Heart left ventricle (tissue), 16 donors: ENCODE measurements at regions of chr11 and their contacts with region 1.

Region 1: GRCh38 chr11:112881461-112881860 is 79.8 kb upstream of the NCAM1 start:
- DNase-seq: peak; percentile 77 to 90 (median 83)
- ATAC-seq: peak; percentile 87 to 96 (median 92)
- H3K4me3 ChIP-seq: peak overlapping the region in 11 of 12 donors; percentile 16 to 63 (median 44)
- H3K27ac ChIP-seq: peak overlapping the region in 11 of 12 donors; percentile 35 to 86 (median 71)
- H3K4me1 ChIP-seq: peaks cover 0 to 33% (median 8%) of the 10 kb centered on the region in 12 donors
- H3K27me3 ChIP-seq: no peaks in the 10 kb centered on the region
- CTCF ChIP-seq: no peak
- POLR2A ChIP-seq: peak in 1 of 2 donors; percentile 64

Region 2: GRCh38 chr11:112762707-112763090 is 118.8 kb before region 1 on chr11:
- intact Hi-C with region 1: no loop called
- DNase-seq: no peak
- ATAC-seq: no peak
- H3K4me3 ChIP-seq: no peak overlapping the region
- H3K27ac ChIP-seq: no peak overlapping the region
- H3K4me1 ChIP-seq: peaks cover 0 to 27% (median 4%) of the 10 kb centered on the region in 12 donors
- H3K27me3 ChIP-seq: no peaks in the 10 kb centered on the region
- CTCF ChIP-seq: no peak
- POLR2A ChIP-seq: no peak

Region 3: DNA sequence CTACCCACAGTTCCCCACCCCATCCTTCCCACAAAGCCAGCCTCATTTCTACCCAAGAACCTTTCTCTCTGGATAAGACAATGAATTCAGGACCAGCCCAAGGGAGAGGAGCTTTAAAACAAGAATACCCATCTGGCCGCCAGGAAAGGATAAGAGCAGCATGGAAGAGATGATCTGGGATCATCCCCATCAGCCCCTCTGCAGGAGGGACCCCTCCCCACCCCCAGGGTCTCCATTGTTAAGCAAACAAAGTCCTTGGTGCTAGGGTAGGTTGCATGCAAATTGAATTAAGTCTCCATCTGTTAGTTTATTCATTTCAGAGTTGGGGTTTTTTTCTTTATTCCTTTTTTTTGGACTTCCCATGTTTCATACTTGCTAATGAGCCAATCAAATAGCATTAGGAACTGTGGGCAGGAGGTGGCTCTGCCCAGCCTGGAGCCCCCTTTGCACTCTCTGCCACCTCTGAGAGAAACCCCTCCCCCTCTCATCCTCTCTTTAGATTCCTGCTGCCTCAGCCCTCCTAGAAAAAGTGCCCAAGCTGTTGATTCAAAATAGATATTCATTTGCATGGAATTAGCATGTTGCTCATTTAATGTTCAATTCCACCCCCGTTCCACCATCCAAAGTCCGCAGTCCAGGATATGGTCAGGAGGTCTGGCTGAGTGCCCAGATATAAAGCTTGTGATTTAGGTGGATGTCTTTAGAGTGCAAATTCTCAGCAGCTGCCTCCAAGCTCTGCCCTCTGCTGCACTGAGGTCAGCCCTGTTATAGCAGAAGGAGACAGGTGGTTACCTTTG is 58.8 kb before region 1 on chr11:
- intact Hi-C with region 1: no loop called
- DNase-seq: no peak
- ATAC-seq: peak in 1 of 4 donors; percentile 18
- H3K4me3 ChIP-seq: no peak overlapping the region
- H3K27ac ChIP-seq: no peak overlapping the region
- H3K4me1 ChIP-seq: peaks cover 0 to 5% (median 0%) of the 10 kb centered on the region in 12 donors
- H3K27me3 ChIP-seq: no peaks in the 10 kb centered on the region
- CTCF ChIP-seq: no peak
- POLR2A ChIP-seq: no peak

Region 4: DNA sequence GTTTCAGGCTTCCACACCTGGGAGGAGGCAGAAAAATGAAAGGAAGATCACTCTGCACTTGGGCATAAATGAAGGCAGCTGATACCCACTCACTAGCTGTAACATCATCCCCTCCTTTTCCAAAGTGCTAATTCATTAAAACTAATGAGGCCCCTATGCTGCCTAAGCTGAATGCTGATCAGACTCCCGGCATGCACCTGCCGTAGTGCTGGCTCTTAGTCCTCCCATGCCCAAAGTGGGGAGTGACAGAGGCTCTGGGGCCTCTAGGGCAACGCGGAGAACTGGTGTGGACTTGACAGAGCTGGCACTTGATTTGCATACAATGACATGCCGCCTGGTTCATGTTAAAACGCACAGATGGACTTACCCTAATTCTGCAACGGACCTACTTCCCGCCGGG is 16.8 kb before region 1 on chr11:
- intact Hi-C with region 1: no loop called
- DNase-seq: peak in 3 of 5 donors; percentile 22 to 32 (median 32)
- ATAC-seq: peak; percentile 62 to 80 (median 74)
- H3K4me3 ChIP-seq: no peak overlapping the region
- H3K27ac ChIP-seq: peak overlapping the region in 4 of 12 donors; percentile 42 to 77 (median 60)
- H3K4me1 ChIP-seq: peaks cover 0 to 20% (median 0%) of the 10 kb centered on the region in 12 donors
- H3K27me3 ChIP-seq: no peaks in the 10 kb centered on the region
- CTCF ChIP-seq: no peak
- POLR2A ChIP-seq: no peak

Region 5: DNA sequence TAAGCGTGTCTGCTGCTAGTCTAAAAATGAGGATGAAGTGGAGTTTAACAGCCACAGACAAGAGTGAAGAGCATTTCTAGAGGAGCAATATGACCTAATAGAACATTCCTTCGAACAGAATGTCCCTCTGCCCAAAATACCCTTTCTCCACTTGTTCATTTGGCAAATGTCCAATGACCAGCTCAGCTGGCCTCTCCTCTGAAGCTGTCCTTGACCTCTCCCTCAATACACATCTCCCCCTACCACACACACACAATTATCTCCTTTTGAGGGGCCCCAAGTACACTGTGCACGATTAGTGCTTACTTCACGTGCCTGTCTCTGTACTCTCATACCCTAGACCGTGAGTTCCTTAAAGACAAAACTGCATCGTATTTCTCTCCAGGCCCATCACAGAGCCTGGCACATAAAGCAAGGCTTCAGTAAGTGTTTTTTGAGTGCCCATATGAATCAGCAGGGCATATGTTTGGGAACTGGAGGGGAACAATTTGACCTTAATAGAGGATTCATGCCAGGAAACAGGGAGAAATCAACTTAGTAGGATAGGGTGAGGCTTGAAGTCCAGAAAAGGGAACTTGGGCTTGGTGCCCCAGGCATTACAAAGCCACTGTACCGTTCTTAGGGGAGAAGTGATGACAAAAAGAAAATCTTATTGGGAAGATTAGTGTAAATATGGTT is 61.6 kb after region 1 on chr11:
- intact Hi-C with region 1: loop called in 1 of 10 experiments (anchors 10 kb)
- DNase-seq: peak in 1 of 5 donors; percentile 56
- ATAC-seq: peak; percentile 80 to 91 (median 88)
- H3K4me3 ChIP-seq: no peak overlapping the region
- H3K27ac ChIP-seq: peak overlapping the region in 11 of 12 donors; percentile 47 to 91 (median 75)
- H3K4me1 ChIP-seq: peaks cover 0 to 15% (median 1%) of the 10 kb centered on the region in 12 donors
- H3K27me3 ChIP-seq: peaks cover 0 to 6% (median 0%) of the 10 kb centered on the region in 9 donors
- CTCF ChIP-seq: no peak
- POLR2A ChIP-seq: no peak